IMR-90 (cell line): ENCODE measurements at regions of chr1 and their contacts with region 1.

Region 1: DNA sequence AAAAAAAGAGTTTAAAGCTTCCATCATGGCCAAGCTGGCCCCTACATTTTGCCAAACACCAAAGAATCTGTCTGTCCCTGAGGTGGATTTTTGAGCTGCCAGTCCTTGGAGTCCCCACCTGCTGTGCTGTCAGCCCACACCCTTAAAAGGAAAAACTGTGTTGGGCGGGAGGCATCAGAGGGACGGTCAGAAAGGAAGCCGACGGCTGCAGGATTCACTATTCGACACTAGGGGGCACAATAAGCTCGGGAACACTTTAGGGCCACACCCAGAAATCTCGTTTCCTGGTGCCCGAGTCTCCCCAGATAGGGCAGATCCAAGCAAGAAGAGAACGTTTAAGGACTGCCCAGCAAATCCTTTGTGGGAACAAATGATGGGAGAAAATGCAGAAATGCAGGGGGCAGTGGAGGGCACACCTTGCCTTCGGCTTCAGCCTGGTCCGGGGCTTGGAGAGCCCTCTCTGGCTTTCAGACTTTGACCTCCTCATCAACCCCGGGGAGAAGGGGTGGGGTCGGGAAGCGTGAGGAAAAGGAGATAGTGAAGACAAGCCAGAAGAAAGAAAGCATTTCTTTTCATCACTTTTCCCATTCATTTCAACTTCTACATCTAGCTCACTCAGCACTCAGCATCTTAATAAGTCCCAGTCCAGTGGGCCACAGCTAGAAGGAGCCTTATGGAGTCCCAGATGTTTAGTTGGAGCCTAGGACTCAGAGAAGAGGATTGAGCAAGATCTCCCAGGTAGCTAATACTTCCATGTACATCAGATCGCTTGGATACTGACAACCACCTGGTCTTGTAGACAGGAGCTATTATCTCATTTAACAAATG is 5.0 kb upstream of the CTTNBP2NL start:
- DNase-seq: peak; percentile 90
- ATAC-seq: peak; percentile 73
- H3K4me3 ChIP-seq: peak overlapping the region; percentile 13
- H3K27ac ChIP-seq: peak overlapping the region; percentile 75
- H3K4me1 ChIP-seq: peaks cover 11% of the 10 kb centered on the region
- H3K27me3 ChIP-seq: no peaks in the 10 kb centered on the region
- CTCF ChIP-seq: peak; percentile 97
- POLR2A ChIP-seq: peak; percentile 53; the same call in 1 of the 2 replicates
- RAD21 ChIP-seq: peak; percentile 98

Region 2: GRCh38 chr1:112114540-112114939 is 276.4 kb before region 1 on chr1:
- CTCF ChIA-PET with region 1: no interaction called
- POLR2A ChIA-PET with region 1: no interaction called
- dilution Hi-C with region 1: no loop called
- in situ Hi-C with region 1: no loop called
- intact Hi-C with region 1: no loop called
- DNase-seq: no peak
- ATAC-seq: no peak
- H3K4me3 ChIP-seq: no peak overlapping the region
- H3K27ac ChIP-seq: no peak overlapping the region
- H3K4me1 ChIP-seq: no peaks in the 10 kb centered on the region
- H3K27me3 ChIP-seq: no peaks in the 10 kb centered on the region
- CTCF ChIP-seq: no peak
- POLR2A ChIP-seq: no peak
- RAD21 ChIP-seq: no peak

Region 3: GRCh38 chr1:112466078-112466660 is 75.2 kb after region 1 on chr1:
- CTCF ChIA-PET with region 1: interaction called, 14 read pairs
- POLR2A ChIA-PET with region 1: interaction called, 3 read pairs
- dilution Hi-C with region 1: no loop called
- in situ Hi-C with region 1: loop called (anchors 5 kb)
- intact Hi-C with region 1: loop called (anchors 1 kb)
- DNase-seq: peak; percentile 94
- ATAC-seq: peak; percentile 85
- H3K4me3 ChIP-seq: peak overlapping the region; percentile 26
- H3K27ac ChIP-seq: peak overlapping the region; percentile 41
- H3K4me1 ChIP-seq: peaks cover 13% of the 10 kb centered on the region
- H3K27me3 ChIP-seq: no peaks in the 10 kb centered on the region
- CTCF ChIP-seq: peak; percentile 87
- POLR2A ChIP-seq: 0 out of 2 replicates have a peak, but pooled peaks have one; percentile 12
- RAD21 ChIP-seq: peak; percentile 81

Region 4: DNA sequence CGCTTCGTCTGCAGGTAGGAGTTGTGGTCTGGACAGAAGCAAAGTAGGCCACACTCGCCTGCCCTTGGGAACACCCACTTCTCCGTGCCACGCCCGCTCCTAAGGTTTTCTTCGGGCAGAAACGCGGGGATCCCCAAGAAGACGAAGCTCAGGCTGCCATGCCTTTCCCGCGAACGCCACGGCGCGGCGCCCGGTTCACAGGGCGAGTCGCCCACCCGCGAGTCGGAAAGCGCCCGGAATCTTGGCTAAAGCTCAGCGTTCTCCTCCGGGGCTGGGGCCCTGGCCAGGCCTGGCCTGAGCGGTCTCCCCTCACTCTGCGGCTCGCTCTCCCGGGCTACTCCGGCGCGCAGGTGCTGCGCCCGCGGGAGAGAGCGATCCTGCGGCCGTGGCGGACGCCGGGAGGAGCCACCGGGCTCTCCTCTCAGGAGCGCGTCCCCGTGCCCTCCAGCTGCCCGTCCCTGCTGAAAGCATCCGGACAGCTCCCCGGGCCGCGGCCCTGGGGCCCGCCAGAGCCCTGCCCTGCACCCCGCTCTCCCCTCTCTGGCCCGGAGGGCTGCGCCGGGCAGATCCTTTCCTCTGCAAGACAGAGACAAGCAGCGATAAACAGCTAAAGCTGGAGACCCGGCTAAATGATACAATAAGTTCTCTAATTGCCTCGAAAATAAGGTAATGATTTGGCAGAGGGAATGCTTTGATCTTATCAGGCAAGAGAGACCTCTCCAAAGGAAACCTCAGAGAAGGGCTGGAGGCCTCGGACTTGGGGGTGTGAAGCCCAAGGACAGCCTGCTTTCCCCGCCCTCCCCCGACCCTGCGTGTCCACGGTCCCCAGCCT is 111.0 kb after region 1 on chr1:
- CTCF ChIA-PET with region 1: interaction called, 10 read pairs
- POLR2A ChIA-PET with region 1: interaction called, 5 read pairs
- dilution Hi-C with region 1: no loop called
- in situ Hi-C with region 1: no loop called
- intact Hi-C with region 1: no loop called
- DNase-seq: peak; percentile 54
- ATAC-seq: peak; percentile 89
- H3K4me3 ChIP-seq: peak overlapping the region; percentile 40
- H3K27ac ChIP-seq: no peak overlapping the region; the same call in 1 of the 2 replicates
- H3K4me1 ChIP-seq: peaks cover 6% of the 10 kb centered on the region; the same call in 1 of the 2 replicates
- H3K27me3 ChIP-seq: peaks cover 27% of the 10 kb centered on the region
- CTCF ChIP-seq: peak; percentile 73
- POLR2A ChIP-seq: no peak
- RAD21 ChIP-seq: peak; percentile 77

Region 5: DNA sequence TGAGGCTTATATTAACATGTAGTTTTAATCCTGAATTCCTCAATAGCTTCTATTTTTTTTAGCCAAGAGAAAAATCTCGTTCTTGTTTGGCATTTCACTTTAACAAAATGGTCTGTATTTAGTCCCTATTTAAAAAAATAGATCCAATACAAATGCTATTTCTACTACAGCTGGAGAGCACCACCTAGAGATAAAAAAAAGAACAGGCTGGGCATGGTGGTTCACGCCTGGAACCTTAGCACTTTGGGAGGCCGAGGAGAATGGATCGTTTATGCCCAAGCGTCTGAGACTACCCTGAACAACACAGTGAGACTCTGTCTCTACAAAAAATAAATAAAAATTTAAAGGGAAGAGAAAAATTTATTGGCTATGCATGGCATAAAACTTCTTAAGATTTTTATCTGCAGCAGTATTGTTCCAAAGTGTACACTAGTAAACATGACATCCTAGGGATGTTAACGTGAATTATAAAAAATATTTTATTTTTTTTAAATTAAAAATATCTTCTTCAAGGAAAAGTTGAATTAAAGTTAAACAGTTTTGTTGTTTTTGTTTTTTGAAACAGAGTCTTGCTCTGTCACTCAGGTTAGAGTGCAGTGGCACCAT is 223.6 kb after region 1 on chr1:
- CTCF ChIA-PET with region 1: interaction called, 13 read pairs
- POLR2A ChIA-PET with region 1: interaction called, 4 read pairs
- dilution Hi-C with region 1: no loop called
- in situ Hi-C with region 1: loop called (anchors 5 kb)
- intact Hi-C with region 1: loop called (anchors 1 kb)
- DNase-seq: peak; percentile 64
- ATAC-seq: peak; percentile 19; the same call in 1 of the 2 replicates
- H3K4me3 ChIP-seq: no peak overlapping the region
- H3K27ac ChIP-seq: no peak overlapping the region
- H3K4me1 ChIP-seq: no peaks in the 10 kb centered on the region
- H3K27me3 ChIP-seq: no peaks in the 10 kb centered on the region
- CTCF ChIP-seq: peak; percentile 82
- POLR2A ChIP-seq: 0 out of 2 replicates have a peak, but pooled peaks have one; percentile 41
- RAD21 ChIP-seq: peak; percentile 80

Region 6: DNA sequence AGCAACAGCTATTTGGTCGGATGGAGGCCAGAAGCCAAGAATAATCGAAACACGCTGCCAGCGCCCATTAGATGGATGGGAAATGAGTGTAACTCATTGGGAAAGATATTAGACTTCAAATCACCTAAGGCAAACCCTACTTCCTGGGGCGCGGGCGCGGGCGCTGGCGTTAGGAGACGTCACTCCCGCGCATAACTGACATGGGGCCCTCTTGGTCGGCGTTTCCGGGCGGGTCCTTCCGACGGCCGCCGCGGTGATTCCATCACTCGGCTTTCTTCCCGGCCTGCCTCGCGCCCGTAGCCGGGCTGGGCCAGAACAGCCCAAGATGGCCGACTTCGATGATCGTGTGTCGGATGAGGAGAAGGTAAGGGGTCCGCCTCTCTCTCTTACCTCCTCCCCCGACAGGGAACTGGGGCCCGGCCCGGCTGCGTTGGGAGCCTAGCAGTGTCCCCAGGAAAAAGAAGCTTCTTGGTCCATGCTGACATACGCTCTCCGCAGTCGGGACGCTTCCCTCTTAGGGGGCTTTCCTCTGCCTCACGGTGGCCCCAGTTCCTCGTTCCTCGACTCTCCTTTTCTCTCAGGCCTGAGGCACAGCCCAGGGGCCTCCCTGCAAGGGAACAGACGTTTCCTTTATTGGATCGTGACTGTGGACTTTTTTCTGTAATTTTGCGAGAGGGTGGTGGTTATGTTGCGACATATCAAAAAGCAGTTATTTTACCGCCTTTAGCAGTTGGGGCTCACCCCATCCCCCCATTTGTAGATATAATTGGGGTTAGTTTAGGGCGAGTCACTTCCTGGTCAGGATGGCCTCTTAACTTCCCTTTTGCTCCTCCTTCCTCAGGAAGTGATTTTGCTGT is 228.8 kb after region 1 on chr1 and contains the start of gene CAPZA1:
- CTCF ChIA-PET with region 1: interaction called, 13 read pairs
- POLR2A ChIA-PET with region 1: no interaction called
- dilution Hi-C with region 1: no loop called
- in situ Hi-C with region 1: loop called (anchors 5 kb)
- intact Hi-C with region 1: loop called (anchors 1 kb)
- DNase-seq: peak; percentile 90
- ATAC-seq: peak; percentile 93
- H3K4me3 ChIP-seq: peak within 1 kb of the TSS; percentile 86
- H3K27ac ChIP-seq: peak within 1 kb of the TSS; percentile 99
- H3K4me1 ChIP-seq: no peaks in the 10 kb centered on the region
- H3K27me3 ChIP-seq: no peaks in the 10 kb centered on the region
- CTCF ChIP-seq: no peak
- POLR2A ChIP-seq: peak; percentile 93
- RAD21 ChIP-seq: no peak
- total RNA-seq, gene CAPZA1: 262 and 440 TPM in 2 replicates

Region 7: DNA sequence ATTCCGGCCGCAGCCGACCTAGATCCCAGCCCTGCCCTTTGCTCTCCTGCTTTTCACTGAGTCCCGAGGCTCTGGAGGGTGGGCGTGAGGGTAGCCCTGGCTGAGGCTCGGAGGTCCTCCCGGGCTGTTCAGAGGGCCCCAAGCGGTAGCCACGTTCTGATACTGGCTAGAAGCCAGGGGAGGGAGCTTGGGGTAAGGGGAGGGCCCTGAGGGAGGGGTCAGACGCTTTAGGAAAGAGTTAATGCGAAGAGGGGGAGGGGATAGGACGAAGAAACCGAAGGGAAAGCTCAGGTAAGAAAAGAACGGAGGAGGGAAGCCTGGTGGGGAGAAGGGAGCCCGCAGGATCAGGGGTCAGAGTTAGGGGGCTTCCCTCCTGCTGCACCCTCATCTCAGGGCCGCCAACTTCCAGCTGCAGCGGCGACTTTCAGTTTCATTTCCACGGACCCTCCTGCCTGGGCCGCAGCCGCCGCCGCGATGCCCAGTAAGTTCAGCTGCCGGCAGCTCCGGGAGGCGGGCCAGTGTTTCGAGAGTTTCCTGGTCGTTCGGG is 283.5 kb after region 1 on chr1 and contains the start of gene MOV10:
- CTCF ChIA-PET with region 1: interaction called, 8 read pairs
- POLR2A ChIA-PET with region 1: no interaction called
- dilution Hi-C with region 1: no loop called
- in situ Hi-C with region 1: no loop called
- intact Hi-C with region 1: loop called (anchors 1 kb)
- DNase-seq: peak; percentile 67
- ATAC-seq: peak; percentile 71
- H3K4me3 ChIP-seq: peak within 1 kb of the TSS; percentile 71
- H3K27ac ChIP-seq: peak within 1 kb of the TSS; percentile 97
- H3K4me1 ChIP-seq: peaks cover 2% of the 10 kb centered on the region; the same call in 1 of the 2 replicates
- H3K27me3 ChIP-seq: no peaks in the 10 kb centered on the region
- CTCF ChIP-seq: no peak
- POLR2A ChIP-seq: peak; percentile 10; the same call in 1 of the 2 replicates
- RAD21 ChIP-seq: no peak; the same call in 1 of the 2 replicates
- total RNA-seq, gene MOV10: 33.9 and 36.7 TPM in 2 replicates

Region 8: GRCh38 chr1:112706908-112707663 is 316.1 kb after region 1 on chr1 and contains the start of gene RHOC:
- CTCF ChIA-PET with region 1: interaction called, 8 read pairs
- POLR2A ChIA-PET with region 1: interaction called, 9 read pairs
- dilution Hi-C with region 1: no loop called
- in situ Hi-C with region 1: loop called (anchors 5 kb)
- intact Hi-C with region 1: loop called (anchors 1 kb)
- DNase-seq: peak; percentile 85
- ATAC-seq: peak; percentile 81
- H3K4me3 ChIP-seq: peak within 1 kb of the TSS; percentile 84
- H3K27ac ChIP-seq: peak within 1 kb of the TSS; percentile 81
- H3K4me1 ChIP-seq: peaks cover 13% of the 10 kb centered on the region
- H3K27me3 ChIP-seq: no peaks in the 10 kb centered on the region; the same call in 1 of the 2 replicates
- CTCF ChIP-seq: peak; percentile 93
- POLR2A ChIP-seq: peak; percentile 74
- RAD21 ChIP-seq: peak; percentile 85
- total RNA-seq, gene RHOC: 699 and 764 TPM in 2 replicates